IMR-90 (cell line): ENCODE measurements at regions of chr7 and their contacts with region 1.

Region 1: DNA sequence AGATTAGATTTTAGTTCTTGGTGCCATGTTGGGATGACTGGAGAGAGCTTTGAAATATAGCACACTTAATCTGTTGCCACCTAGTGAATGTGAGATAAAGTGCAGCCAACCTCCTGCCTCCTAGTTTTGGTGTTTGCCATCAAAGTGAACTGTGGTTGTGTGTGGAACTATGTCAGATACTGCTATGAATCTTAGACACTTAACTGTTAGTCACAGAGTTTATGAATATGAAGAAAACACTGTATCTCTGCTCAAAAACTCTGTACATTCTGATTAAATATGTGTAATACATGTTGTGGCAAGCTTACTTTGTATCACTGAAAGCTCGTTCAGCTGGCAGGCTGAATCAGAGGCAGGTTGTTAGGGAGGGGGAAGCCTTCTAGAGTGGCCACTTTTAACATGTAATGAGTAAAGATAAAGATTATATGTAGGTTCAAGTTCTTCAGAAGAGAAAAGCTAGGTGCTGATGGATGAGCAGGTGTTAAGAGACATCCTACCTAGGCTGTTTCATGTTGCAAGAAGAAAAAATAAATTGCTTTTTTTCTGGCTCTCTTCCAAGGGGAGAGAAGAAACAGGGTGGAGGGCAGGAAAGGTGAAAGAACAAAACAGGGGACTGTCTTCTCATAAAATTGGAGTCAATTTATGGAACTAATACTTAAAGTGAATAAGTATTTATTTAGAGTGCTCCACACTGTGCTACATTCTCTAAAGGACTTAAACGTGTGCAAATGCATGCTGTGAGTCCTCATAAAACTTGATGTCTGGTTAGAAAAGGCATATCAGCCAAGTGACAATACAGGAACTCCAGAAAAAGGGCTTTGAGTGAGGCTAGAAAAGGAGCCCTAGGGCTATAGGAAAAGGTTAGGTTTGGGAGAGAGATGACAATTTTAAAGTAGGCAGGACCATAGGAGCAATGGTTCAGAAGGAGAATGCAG is 14.1 kb upstream of the LAMB1 start:
- DNase-seq: peak; percentile 70
- ATAC-seq: peak; percentile 66
- H3K4me3 ChIP-seq: no peak overlapping the region
- H3K27ac ChIP-seq: peak overlapping the region; percentile 31; the same call in 1 of the 2 replicates
- H3K4me1 ChIP-seq: peaks cover 13% of the 10 kb centered on the region
- H3K27me3 ChIP-seq: no peaks in the 10 kb centered on the region
- CTCF ChIP-seq: peak; percentile 43
- POLR2A ChIP-seq: no peak
- RAD21 ChIP-seq: peak; percentile 36

Region 2: DNA sequence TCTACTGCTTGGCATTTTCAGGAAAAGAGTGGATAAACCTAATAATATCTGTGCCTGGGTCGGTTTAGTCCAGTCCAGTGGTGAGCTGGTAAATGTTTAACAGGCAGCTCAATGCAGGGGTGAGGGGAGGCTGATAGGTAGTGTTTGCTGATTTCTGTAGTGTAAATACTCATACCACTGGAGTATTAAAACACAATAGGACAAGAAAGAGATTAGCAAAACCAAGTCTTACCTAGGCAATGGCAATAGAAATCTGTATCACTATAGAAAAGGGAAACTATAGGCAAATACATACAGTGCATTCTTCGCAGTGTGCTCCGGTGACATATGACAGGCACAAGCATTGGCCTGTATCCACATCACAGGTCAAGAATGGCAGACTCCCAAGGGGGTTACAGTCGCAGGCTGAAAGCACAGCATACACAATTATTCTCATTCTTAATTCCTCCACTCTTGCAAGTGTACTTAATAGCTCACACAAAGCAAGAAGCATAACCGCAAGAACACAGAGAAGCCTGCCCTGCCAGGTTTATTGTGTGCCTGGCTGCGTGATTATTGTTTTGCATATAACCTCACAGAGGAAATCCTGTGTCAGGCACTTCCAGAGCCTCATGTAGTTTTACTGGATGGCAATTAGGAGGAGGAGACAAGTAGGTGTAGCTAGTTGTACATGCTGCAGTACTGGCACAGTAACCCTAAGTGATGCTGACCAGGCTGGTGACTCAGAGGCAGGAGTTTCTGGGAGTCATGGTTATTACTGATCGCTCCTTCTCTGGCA is 78.0 kb after region 1 on chr7:
- CTCF ChIA-PET with region 1: no interaction called
- POLR2A ChIA-PET with region 1: no interaction called
- dilution Hi-C with region 1: no loop called
- in situ Hi-C with region 1: loop called (anchors 5 kb)
- intact Hi-C with region 1: loop called (anchors 5 kb)
- DNase-seq: peak; percentile 91
- ATAC-seq: peak; percentile 87
- H3K4me3 ChIP-seq: no peak overlapping the region
- H3K27ac ChIP-seq: peak overlapping the region; percentile 85; the same call in 1 of the 2 replicates
- H3K4me1 ChIP-seq: peaks cover 21% of the 10 kb centered on the region
- H3K27me3 ChIP-seq: no peaks in the 10 kb centered on the region
- CTCF ChIP-seq: no peak
- POLR2A ChIP-seq: no peak
- RAD21 ChIP-seq: no peak

Region 3: DNA sequence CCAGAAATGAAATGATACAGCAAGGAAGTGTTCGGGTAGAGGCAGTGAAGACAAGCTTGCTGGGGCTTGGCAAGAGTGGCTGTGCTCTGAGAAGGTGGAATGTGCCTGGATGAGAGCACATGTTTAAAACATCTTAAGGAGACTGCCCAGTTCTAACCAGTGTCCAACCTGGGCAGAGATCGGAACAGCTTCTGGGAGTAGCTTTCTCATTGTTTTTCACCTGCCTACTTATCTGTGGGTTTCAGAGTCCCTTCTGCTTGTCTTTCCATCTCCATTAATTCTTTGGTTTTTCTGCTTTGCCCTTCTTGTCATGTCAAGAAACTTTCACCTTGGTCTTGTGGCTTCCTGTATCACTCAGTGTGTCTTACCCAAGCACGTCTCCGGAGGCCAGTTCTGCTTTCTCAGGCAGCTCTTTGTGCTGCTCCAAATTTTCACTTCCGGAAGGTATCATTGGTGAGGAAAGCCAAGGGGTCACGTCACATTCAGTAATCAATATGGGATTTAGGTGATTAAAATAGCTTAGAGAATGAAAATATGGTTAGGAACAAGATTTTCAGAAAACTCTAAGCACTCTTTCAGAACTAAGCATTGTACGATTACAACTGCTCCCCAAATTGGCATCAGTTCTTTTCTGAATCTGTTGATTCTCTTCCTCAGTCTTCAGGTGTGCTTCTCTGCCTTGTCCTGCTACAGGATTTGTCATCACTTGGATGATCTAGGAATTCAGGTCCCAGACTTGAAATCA is 118.5 kb after region 1 on chr7:
- CTCF ChIA-PET with region 1: interaction called, 3 read pairs
- POLR2A ChIA-PET with region 1: no interaction called
- dilution Hi-C with region 1: loop called (anchors 25 kb)
- in situ Hi-C with region 1: no loop called
- intact Hi-C with region 1: loop called (anchors 5 kb)
- DNase-seq: no peak
- ATAC-seq: no peak
- H3K4me3 ChIP-seq: no peak overlapping the region
- H3K27ac ChIP-seq: no peak overlapping the region
- H3K4me1 ChIP-seq: peaks cover 2% of the 10 kb centered on the region; the same call in 1 of the 2 replicates
- H3K27me3 ChIP-seq: no peaks in the 10 kb centered on the region
- CTCF ChIP-seq: no peak
- POLR2A ChIP-seq: no peak
- RAD21 ChIP-seq: no peak